SK-N-SH (cell line): ENCODE measurements at regions of chr4 and their contacts with region 1.

Region 1: GRCh38 chr4:53055274-53055673 is 193.2 kb downstream of the RASL11B start:
- DNase-seq: peak; percentile 14
- H3K4me3 ChIP-seq: no peak overlapping the region
- H3K27ac ChIP-seq: peak overlapping the region in 1 of 2 experiments; percentile 93; a peak in 2 of 4 replicates
- H3K4me1 ChIP-seq: peaks cover 7 to 40% of the 10 kb centered on the region in 2 experiments; a peak in 3 of 4 replicates
- H3K27me3 ChIP-seq: no peaks in the 10 kb centered on the region
- CTCF ChIP-seq: no peak
- EP300 ChIP-seq: peak in 1 of 2 experiments; percentile 25; a peak in 1 of 4 replicates
- RAD21 ChIP-seq: no peak; the same call in 1 of the 2 replicates

Region 2: DNA sequence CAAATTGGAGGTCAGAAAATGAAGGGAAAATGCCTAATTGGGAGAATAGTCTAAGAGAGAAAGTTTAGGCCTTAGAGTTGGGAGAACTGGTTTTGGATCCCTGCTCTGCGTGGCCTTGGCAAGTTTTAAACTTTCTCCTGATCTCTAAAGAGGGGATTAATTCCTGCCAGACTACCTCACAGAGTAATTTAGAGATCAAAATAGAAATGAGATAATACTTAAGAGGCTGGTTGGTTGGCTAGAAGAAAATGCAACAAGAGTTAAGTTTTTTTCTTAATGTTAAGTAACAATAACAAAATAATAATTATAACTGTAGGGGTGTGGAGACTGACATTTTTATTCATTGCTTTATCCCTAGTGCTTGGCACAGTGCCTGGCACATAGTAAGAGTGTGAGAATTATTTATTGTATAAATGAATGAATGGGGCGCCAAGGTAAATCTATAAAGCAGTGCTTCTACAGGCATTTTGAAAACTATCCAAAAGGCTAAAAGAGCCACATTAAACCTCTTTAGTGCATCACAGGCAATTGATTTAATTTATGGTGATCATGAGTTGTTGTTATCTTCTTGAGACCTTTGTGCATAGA is 32.7 kb before region 1 on chr4:
- CTCF ChIA-PET with region 1: interaction called, 3 read pairs
- POLR2A ChIA-PET with region 1: interaction called, 20 read pairs
- DNase-seq: no peak
- H3K4me3 ChIP-seq: no peak overlapping the region
- H3K27ac ChIP-seq: peak overlapping the region in 1 of 2 experiments; percentile 99; a peak in 2 of 4 replicates
- H3K4me1 ChIP-seq: peaks cover 12 to 44% of the 10 kb centered on the region in 2 experiments; a peak in 3 of 4 replicates
- H3K27me3 ChIP-seq: no peaks in the 10 kb centered on the region
- CTCF ChIP-seq: no peak
- EP300 ChIP-seq: no peak
- RAD21 ChIP-seq: no peak

Region 3: GRCh38 chr4:53196882-53197771 is 141.9 kb after region 1 on chr4:
- CTCF ChIA-PET with region 1: interaction called, 21 read pairs
- POLR2A ChIA-PET with region 1: interaction called, 11 read pairs
- DNase-seq: peak; percentile 24
- H3K4me3 ChIP-seq: peak overlapping the region; percentile 31 to 44; a peak in 3 of 4 replicates
- H3K27ac ChIP-seq: peak overlapping the region; percentile 65 to 99
- H3K4me1 ChIP-seq: peaks cover 12 to 36% of the 10 kb centered on the region in 2 experiments; a peak in 3 of 4 replicates
- H3K27me3 ChIP-seq: no peaks in the 10 kb centered on the region
- CTCF ChIP-seq: peak; percentile 89
- EP300 ChIP-seq: no peak
- RAD21 ChIP-seq: peak; percentile 91

Region 4: DNA sequence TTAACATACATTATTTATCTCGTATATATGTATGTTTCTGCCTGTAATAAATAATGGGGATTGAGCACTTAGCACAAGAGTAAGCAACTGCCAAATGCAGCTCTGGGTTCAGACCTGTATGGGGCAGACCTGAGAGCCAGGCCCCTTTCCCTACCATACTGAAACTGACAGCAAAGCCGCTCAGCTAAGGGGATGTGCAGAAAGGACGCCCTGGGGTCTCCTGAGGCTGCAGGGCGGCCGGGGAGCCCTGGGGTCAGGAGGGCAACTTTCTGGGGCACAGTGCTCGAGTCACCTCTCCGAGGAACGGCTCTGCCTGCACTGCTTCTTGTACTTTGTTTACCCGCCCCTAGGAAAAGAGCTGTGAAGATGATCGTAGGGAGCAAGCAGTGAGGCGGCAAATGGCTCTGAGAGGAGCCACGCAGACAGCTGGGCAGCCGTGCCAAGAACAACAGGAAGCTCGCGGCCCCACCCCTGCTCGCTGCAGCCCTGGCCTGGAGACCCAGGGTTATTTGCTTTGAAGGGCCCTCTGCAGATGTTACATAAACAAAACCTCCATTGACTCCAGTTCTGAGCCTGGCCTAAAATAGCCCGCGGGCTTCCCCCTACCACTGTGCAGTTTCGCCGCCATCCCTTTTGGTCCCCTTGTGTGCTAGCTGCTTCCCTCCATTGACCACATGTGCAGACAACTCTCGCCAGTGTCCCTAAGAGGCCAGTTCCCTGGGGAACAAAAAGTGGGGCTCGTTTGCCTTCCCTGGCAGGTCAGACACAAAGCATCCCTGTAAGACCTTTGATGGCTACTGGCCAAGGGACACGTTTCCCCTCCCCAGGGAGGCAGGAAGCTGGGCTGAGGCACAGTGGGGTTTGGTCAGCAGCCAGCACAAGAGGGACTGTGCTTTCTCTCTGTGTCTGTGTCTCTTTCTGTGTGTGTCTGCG is 647.3 kb after region 1 on chr4:
- CTCF ChIA-PET with region 1: no interaction called
- POLR2A ChIA-PET with region 1: interaction called, 16 read pairs
- DNase-seq: peak; percentile 84
- H3K4me3 ChIP-seq: peak overlapping the region; percentile 4 to 22; a peak in 2 of 4 replicates
- H3K27ac ChIP-seq: peak overlapping the region; percentile 81 to 99
- H3K4me1 ChIP-seq: peaks cover 24 to 40% of the 10 kb centered on the region in 2 experiments
- H3K27me3 ChIP-seq: no peaks in the 10 kb centered on the region
- CTCF ChIP-seq: peak; percentile 20; the same call in 1 of the 2 replicates
- EP300 ChIP-seq: peak; percentile 22 to 38; a peak in 2 of 4 replicates
- RAD21 ChIP-seq: peak; percentile 20